ENCODE measurements at regions of chr12 and their contacts with region 1.

Region 1: DNA sequence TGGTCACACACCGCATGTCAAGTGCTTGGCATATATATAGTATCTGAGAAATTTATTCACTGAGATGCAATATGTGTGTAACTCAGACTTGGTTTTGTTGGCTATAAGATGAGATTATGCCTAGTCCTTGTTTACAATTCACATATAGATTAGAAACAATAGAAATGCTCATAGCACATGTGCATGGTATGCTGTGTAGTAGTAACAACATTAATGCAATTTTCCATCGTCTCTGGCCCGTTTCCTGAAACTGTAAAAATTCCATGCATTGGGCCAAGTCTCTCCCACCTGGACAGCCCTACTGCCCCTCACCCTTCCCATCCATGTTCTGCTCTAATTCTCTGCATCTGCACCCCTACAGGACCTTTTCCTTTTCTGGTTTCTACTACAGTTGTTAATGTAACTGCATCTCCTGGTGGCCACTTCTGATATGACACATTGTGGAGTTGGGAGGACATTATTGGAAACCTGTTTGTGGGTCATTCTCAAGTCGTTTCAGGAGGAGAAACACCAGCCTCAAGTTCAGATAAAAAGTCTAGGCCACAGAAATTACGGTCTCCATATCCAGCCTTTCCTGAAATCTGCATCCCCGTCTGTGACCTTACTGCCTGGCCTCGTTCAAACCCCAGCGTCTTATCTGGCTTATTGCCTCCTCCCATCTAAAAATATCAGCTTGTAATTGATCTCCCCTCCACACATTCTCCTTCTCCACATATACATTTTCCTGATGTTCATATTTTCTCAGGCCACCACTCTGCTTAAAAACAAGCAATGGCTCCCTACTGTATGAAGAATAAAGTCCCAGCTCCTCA is 37.5 kb downstream of the EMP1 start:
- DNase-seq: peak; percentile 70
- H3K4me3 Mint-ChIP-seq: no peak overlapping the region
- H3K27ac Mint-ChIP-seq: no peak overlapping the region
- H3K4me1 Mint-ChIP-seq: peaks cover 14% of the 10 kb centered on the region
- H3K27me3 Mint-ChIP-seq: no peaks in the 10 kb centered on the region
- CTCF ChIP-seq: peak; percentile 88

Region 2: DNA sequence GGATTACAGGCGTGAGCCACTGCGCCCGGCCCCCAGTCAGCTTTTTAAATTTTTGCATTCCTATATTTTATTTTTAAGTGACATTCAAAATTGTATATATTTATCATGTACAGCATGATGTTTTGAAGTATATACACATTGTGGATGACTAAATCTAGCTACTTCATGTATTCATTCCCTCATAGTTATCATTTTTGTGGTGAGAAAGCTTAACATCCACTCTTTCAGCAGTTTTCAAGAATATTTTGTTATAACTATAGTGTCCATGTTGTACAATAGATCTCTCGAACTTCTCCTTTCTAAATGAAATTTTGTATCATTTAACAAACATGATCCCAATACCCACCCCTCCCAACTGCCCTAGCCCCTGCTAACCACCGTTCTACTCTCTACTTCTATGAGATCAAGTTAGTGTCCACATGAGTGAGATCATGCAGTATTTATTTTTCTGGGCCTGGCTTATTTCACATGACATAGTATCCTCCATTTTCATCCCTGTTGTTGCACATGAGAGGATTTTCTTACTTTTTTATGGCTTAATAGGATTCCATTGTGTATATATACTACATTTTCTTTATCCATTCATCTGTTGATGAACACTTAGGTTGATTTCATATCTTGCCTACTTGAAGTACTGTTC is 225.2 kb before region 1 on chr12:
- CTCF ChIA-PET with region 1: no interaction called
- intact Hi-C with region 1: loop called (anchors 5 kb)
- DNase-seq: no peak
- H3K4me3 Mint-ChIP-seq: no peak overlapping the region
- H3K27ac Mint-ChIP-seq: no peak overlapping the region
- H3K4me1 Mint-ChIP-seq: peaks cover 18% of the 10 kb centered on the region
- H3K27me3 Mint-ChIP-seq: peaks cover 98% of the 10 kb centered on the region
- CTCF ChIP-seq: no peak